Aorta (tissue), 5 donors: ENCODE measurements at regions of chr1 and their contacts with region 1.

Region 1: DNA sequence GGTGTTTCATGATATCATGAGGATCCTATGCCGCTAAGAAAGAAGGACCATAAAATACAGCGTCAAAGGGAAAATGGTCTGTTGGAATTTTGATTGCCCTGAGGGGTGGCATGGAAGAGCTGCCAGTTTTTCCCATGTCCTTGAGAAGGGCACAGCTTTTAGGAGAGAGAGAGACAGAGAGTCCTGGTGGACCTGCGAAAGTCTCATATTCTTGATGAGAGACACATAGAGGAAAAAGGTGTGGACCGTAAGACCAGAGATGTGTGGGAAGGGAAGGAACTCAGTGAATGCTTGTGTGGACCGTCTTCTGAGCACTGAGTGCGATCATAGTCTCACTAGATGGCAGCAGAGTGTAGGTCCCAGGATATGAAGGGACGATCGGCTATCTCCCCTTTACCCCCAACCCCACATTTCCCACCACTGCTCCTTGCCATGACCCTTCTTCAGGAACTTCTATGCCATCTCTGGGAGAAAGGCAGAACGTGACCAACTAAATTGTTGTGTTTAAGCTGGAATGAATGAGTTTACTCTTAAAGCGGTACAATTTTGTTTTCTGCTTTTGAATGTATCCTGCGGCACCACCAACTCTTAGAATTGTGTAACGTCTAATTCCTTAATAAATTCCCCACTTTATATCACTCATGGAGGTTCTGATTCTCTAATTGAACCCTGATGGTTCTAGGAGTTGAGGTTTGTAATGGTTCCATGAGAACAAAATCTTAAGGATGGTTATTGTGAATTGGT is 117.7 kb downstream of the CTH start:
- DNase-seq: no peak
- ATAC-seq: peak; percentile 64
- H3K4me3 ChIP-seq: no peak overlapping the region
- H3K27ac ChIP-seq: no peak overlapping the region
- H3K4me1 ChIP-seq: no peaks in the 10 kb centered on the region
- H3K27me3 ChIP-seq: no peaks in the 10 kb centered on the region

Region 2: DNA sequence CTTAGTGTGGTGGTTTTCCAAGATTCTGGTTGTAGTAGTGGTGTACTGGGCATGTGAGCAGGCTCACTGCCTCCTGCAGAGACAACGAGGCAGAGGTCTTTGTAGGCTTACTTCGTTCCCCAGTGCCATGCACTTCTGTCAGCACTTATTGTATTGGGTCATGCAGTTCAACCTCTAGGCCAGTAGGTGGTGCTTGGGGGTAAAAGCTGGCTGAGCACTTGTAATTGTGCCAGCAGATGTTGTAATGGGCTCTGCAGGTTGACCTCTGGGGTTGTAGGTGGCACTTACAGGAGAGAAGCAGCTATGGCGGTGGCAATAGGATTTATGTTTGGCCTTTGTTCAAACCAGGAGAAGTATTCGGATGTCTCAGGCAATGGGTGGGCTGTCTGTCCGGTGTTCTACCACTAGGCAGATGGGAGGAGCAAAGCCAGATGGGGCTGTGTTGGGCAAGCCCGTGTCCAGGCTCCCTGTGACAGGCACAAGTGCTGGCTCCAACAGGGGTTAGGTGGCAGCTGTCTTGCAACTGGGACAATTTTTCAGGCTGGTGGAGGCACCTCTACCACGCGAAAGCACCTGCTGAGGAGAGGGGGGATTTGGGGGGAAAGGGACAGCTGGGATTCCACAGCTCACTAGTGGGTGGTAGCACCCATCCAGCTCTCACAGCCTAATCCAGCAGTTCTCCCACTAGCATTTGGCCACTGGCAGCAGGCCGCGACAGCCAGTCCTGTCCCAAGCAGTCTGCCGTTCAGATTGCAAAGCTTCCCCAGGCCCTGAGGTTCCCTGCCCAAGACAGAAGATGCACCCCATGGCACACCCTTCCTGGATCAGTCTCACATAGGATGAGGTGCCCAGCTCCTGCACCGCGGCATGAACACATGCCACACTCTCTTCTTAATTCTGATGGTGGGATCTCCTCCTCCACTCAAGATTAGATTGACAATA is 156.8 kb after region 1 on chr1:
- intact Hi-C with region 1: loop called in 1 of 2 experiments (anchors 5 kb)
- DNase-seq: peak; percentile 54 to 72
- ATAC-seq: peak; percentile 92
- H3K4me3 ChIP-seq: no peak overlapping the region
- H3K27ac ChIP-seq: no peak overlapping the region
- H3K4me1 ChIP-seq: no peaks in the 10 kb centered on the region
- H3K27me3 ChIP-seq: no peaks in the 10 kb centered on the region